Esophagus muscularis mucosa (tissue), 4 donors: ENCODE measurements at regions of chr17 and their contacts with region 1.

Region 1: GRCh38 chr17:75199886-75200618 is 5.4 kb upstream of the NUP85 start:
- DNase-seq: no peak
- H3K4me3 ChIP-seq: no peak overlapping the region
- H3K27ac ChIP-seq: no peak overlapping the region
- H3K4me1 ChIP-seq: peaks cover 6 to 10% (median 8%) of the 10 kb centered on the region in 4 donors
- H3K27me3 ChIP-seq: no peaks in the 10 kb centered on the region
- CTCF ChIP-seq: no peak
- EP300 ChIP-seq: no peak
- POLR2A ChIP-seq: no peak

Region 2: DNA sequence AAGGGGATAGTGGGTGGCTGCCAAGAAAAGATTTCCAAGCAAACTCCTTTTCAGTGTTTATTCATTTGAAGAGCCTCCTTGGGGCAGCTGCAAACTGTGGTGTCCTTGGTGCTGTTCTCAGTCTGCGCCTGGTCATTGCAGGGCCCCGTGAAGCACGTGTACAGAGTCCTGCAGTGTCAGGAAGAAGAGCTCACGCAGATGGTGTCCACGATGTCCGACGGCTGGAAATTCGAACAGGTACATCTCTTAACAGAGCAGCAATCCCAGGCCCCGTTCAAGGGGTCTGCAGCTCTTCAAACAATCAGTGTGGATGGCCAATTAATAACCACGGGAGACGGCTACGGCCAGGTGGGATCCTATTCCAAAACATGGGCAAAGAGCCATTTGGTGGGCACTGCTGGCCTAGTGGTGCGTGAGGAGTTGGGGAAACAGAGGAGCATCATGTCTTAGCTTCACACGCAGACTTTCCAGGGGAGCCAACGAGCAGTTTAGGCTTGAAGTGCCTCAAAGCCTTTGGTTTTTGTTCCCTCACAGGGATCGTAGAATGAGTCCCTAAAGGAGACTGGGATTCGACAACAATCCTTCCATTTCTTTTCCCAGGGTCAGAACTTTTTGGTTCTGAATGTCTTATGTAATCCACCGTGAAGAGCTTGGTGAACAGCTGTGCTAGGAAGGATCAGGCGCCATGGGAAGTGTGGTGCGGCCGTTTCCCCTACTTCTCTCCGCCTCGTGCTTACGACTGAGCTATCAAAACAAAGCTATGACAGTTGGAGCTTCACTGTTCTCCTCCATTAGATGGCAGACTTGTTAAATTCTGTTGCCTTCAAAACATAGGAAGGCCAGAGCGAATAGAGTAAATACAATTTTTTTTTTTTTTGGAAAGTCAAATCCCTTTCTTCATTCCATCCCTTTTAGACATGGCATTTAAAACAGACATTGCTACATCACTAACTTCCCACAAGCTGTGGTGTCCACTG is 140.4 kb before region 1 on chr17:
- intact Hi-C with region 1: loop called (anchors 5 kb)
- DNase-seq: no peak
- H3K4me3 ChIP-seq: no peak overlapping the region
- H3K27ac ChIP-seq: peak overlapping the region; percentile 69 to 85 (median 76)
- H3K4me1 ChIP-seq: peaks cover 10 to 18% (median 16%) of the 10 kb centered on the region in 4 donors
- H3K27me3 ChIP-seq: no peaks in the 10 kb centered on the region
- CTCF ChIP-seq: peak; percentile 46 to 63 (median 50)
- EP300 ChIP-seq: no peak
- POLR2A ChIP-seq: no peak

Region 3: DNA sequence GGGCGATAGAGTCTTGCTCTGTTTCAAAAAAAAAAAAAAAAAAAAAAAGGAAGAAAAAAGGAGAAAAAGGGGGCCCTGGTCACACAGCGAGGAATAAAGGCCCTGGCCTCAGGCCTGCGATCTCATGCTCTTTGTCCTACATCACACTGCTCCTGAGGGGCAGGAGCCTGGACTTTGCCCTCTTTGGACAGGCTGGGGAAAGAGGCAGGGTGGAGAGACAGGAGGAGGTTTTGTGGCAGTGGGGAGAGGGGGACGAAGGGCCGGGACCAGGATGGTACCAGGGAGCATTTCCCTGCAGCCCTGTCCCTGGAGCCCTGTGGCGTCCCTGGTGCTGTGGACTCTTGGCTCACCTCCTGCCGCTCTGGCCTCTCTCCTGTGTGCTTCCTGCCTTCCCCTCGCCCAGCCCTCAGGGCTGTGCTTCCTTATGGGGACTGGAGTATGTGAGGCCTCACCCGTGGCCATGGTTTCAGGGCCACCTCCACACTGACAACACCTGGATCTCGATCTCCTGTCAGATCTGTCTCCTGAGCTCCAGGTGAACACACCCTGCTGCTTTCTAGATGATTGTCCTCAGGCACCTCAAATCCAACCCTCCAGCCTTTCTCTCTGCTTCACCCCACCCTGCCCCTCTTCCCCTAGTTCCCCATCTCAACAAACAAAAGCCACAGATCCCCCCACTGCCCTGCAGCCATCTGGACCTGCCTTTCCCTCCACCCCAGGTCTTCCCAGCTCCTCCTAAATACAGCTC is 109.1 kb after region 1 on chr17:
- intact Hi-C with region 1: no loop called
- DNase-seq: no peak
- H3K4me3 ChIP-seq: no peak overlapping the region
- H3K27ac ChIP-seq: peak overlapping the region in 3 of 4 donors; percentile 39 to 41 (median 40)
- H3K4me1 ChIP-seq: peaks cover 0 to 9% (median 2%) of the 10 kb centered on the region in 4 donors
- H3K27me3 ChIP-seq: no peaks in the 10 kb centered on the region
- CTCF ChIP-seq: no peak
- EP300 ChIP-seq: no peak
- POLR2A ChIP-seq: no peak